Activated CD4-positive, alpha-beta T cell treated with anti-CD3 and anti-CD28 coated beads for 36 hours (primary cell): ENCODE measurements at regions of chr17 and their contacts with region 1.

Region 1: GRCh38 chr17:40287494-40288369 is at the start of gene CDC6:
- DNase-seq: peak; percentile 99
- ATAC-seq: peak; percentile 87
- H3K4me3 Mint-ChIP-seq: peak within 1 kb of the TSS; percentile 100
- H3K27ac Mint-ChIP-seq: peak within 1 kb of the TSS; percentile 100
- H3K4me1 Mint-ChIP-seq: peaks cover 60% of the 10 kb centered on the region
- H3K27me3 Mint-ChIP-seq: no peaks in the 10 kb centered on the region
- total RNA-seq, gene CDC6: 105 to 171 TPM

Region 2: GRCh38 chr17:38799378-38800236 is 1488.1 kb before region 1 on chr17 and contains the start of gene PIP4K2B:
- CTCF ChIA-PET with region 1: no interaction called
- POLR2A ChIA-PET with region 1: no interaction called
- intact Hi-C with region 1: no loop called
- DNase-seq: peak; percentile 93
- ATAC-seq: peak; percentile 83
- H3K4me3 Mint-ChIP-seq: peak within 1 kb of the TSS; percentile 99
- H3K27ac Mint-ChIP-seq: peak within 1 kb of the TSS; percentile 94
- H3K4me1 Mint-ChIP-seq: peaks cover 33% of the 10 kb centered on the region
- H3K27me3 Mint-ChIP-seq: no peaks in the 10 kb centered on the region
- total RNA-seq, gene PIP4K2B: 36.3 to 41.6 TPM

Region 3: DNA sequence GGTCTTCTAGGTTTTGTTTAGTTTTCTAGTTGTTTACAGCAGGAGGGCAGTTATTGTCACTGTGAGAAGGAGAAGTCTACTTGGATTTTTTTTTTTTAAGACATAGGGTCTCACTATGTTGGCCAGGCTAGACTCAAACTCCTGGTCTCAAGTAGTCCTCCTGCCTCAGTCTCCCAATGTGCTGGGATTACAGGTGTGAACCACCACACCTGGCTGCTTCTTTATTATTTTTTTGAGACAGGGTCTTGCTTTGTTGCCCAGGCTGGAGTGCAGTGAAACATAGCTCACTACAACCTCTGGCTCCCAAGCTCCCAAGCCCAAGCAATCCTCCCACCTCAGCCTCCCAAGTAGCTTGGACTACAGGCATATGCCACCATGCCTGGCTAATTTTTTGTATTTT is 993.7 kb before region 1 on chr17:
- CTCF ChIA-PET with region 1: no interaction called
- POLR2A ChIA-PET with region 1: no interaction called
- intact Hi-C with region 1: no loop called
- DNase-seq: no peak
- ATAC-seq: no peak
- H3K4me3 Mint-ChIP-seq: no peak overlapping the region
- H3K27ac Mint-ChIP-seq: no peak overlapping the region
- H3K4me1 Mint-ChIP-seq: no peaks in the 10 kb centered on the region
- H3K27me3 Mint-ChIP-seq: no peaks in the 10 kb centered on the region

Region 4: GRCh38 chr17:40019140-40019991 is 268.4 kb before region 1 on chr17:
- CTCF ChIA-PET with region 1: no interaction called
- POLR2A ChIA-PET with region 1: no interaction called
- intact Hi-C with region 1: loop called in 1 of 2 experiments (anchors 10 kb)
- DNase-seq: no peak
- ATAC-seq: no peak
- H3K4me3 Mint-ChIP-seq: no peak overlapping the region
- H3K27ac Mint-ChIP-seq: no peak overlapping the region
- H3K4me1 Mint-ChIP-seq: no peaks in the 10 kb centered on the region
- H3K27me3 Mint-ChIP-seq: no peaks in the 10 kb centered on the region

Region 5: GRCh38 chr17:40139566-40140058 is 148.1 kb before region 1 on chr17:
- CTCF ChIA-PET with region 1: no interaction called
- POLR2A ChIA-PET with region 1: no interaction called
- intact Hi-C with region 1: loop called in 1 of 2 experiments (anchors 1 kb)
- DNase-seq: no peak
- ATAC-seq: peak; percentile 5
- H3K4me3 Mint-ChIP-seq: peak overlapping the region; percentile 90
- H3K27ac Mint-ChIP-seq: peak overlapping the region; percentile 98
- H3K4me1 Mint-ChIP-seq: peaks cover 39% of the 10 kb centered on the region
- H3K27me3 Mint-ChIP-seq: no peaks in the 10 kb centered on the region

Region 6: GRCh38 chr17:40170325-40170724 is 117.4 kb before region 1 on chr17:
- CTCF ChIA-PET with region 1: no interaction called
- POLR2A ChIA-PET with region 1: no interaction called
- intact Hi-C with region 1: no loop called
- DNase-seq: no peak
- ATAC-seq: no peak
- H3K4me3 Mint-ChIP-seq: no peak overlapping the region
- H3K27ac Mint-ChIP-seq: no peak overlapping the region
- H3K4me1 Mint-ChIP-seq: no peaks in the 10 kb centered on the region
- H3K27me3 Mint-ChIP-seq: no peaks in the 10 kb centered on the region

Region 7: DNA sequence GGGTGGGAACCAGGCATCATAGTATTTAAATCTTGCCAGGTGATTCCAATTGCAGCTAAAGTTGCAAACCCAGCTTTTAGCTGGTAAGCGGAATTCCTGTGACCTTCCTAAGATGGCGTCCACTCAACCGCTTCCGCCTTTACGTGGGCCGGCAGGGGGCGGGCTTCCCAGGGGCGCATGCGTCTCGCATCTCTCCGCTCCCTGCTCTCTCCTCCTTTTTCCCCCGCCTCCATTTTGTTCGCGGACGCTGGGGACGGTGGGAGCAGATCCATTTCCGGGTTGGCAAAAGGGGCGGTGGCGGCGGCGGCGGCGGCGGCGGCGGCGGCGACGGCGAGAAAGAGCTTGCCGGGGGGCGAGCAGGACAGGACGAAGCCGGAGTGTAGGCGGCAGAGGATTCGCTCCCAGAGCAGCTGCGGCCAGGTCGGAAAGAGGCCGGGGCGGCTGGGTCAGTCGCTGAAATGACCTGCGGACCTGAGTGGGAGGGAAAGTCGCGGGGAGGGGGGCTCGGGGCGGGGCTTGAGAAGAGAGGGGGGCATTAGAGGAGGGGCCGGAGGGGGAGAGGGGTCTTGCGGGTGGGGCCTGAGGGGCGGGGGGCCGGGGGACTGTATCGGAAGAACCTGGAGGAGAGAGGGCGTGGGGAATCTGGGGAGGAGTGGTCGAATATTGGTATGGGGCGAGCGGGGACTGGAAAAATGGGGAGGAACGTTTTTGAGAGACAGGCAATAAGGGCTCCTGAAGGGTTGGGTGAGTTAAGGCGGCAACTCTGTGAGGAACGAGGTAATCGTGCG is 68.5 kb before region 1 on chr17 and contains the start of gene WIPF2:
- CTCF ChIA-PET with region 1: interaction called, 9 read pairs
- POLR2A ChIA-PET with region 1: interaction called, 9 read pairs
- intact Hi-C with region 1: loop called (anchors 1 kb)
- DNase-seq: peak; percentile 98
- ATAC-seq: peak; percentile 96
- H3K4me3 Mint-ChIP-seq: peak within 1 kb of the TSS; percentile 89
- H3K27ac Mint-ChIP-seq: peak within 1 kb of the TSS; percentile 100
- H3K4me1 Mint-ChIP-seq: peaks cover 26% of the 10 kb centered on the region
- H3K27me3 Mint-ChIP-seq: no peaks in the 10 kb centered on the region
- total RNA-seq, gene WIPF2: 18.4 to 23.6 TPM

Region 8: GRCh38 chr17:40317880-40318829 is 30.4 kb after region 1 on chr17:
- CTCF ChIA-PET with region 1: interaction called, 6 read pairs
- POLR2A ChIA-PET with region 1: interaction called, 3 read pairs
- intact Hi-C with region 1: loop called (anchors 1 to 2 kb)
- DNase-seq: peak; percentile 96
- ATAC-seq: peak; percentile 72
- H3K4me3 Mint-ChIP-seq: peak overlapping the region; percentile 85
- H3K27ac Mint-ChIP-seq: peak overlapping the region; percentile 91
- H3K4me1 Mint-ChIP-seq: peaks cover 75% of the 10 kb centered on the region
- H3K27me3 Mint-ChIP-seq: no peaks in the 10 kb centered on the region